ENCODE measurements at regions of chr20 and their contacts with region 1.

Region 1: DNA sequence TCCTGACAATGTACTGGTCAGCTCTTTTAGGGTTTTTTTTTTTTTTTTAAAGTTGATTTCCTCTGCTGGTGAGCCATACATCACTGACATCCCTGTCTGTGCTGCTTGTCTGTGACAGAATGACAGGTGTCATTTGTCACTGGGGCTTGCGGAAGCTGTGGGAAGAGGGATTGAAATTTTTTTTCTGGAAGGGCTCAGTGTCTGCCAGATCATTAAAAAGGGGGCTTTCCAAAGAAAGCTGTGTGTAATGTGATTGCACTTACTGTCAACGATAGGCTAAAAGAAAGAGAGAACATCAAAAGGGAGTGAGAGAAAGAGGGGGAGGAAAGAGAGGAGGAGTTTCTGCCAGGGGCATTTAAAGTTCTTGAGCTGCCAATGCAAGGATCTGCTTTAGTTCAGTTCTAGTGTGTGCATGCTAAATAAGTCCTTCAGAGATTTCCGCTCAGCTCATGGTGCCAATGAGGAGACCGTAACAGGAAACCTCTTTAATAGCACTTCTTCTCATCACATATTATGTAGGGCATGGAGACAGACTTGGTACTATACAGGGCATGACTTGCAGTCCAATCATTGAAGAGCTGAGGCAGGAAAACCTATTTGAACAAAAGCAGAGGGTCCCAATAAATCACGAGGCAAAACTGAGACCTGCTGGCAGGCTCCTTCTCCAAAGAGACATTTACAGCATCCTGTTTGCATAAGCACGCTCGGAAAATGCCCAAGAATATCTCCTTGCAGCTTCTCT is 177.2 kb downstream of the TSHZ2 start:
- DNase-seq: no peak
- H3K4me3 Mint-ChIP-seq: peak overlapping the region; percentile 49
- H3K27ac Mint-ChIP-seq: peak overlapping the region; percentile 43
- H3K4me1 Mint-ChIP-seq: peaks cover 44% of the 10 kb centered on the region
- H3K27me3 Mint-ChIP-seq: no peaks in the 10 kb centered on the region

Region 2: DNA sequence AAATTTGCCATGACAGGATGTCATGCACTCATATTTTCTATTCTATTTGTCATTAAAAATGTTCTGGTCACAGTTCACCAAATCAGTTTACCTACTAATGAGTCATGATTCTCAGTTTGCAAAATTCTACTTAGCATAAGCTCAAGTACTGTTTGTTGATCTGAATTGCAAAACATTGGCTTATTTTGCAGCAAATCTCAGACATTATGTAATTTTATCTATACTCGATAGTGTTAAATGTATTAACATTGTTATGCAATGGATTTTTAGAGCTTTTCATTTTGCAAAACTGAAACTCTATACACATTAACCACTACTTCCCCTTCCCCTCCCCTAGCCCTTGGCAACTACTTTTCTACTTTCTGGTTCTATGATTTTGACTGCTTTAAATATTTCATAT is 743.9 kb before region 1 on chr20:
- intact Hi-C with region 1: loop called (anchors 10 kb)
- DNase-seq: no peak
- H3K4me3 Mint-ChIP-seq: no peak overlapping the region
- H3K27ac Mint-ChIP-seq: peak overlapping the region; percentile 65
- H3K4me1 Mint-ChIP-seq: peaks cover 47% of the 10 kb centered on the region
- H3K27me3 Mint-ChIP-seq: no peaks in the 10 kb centered on the region

Region 3: DNA sequence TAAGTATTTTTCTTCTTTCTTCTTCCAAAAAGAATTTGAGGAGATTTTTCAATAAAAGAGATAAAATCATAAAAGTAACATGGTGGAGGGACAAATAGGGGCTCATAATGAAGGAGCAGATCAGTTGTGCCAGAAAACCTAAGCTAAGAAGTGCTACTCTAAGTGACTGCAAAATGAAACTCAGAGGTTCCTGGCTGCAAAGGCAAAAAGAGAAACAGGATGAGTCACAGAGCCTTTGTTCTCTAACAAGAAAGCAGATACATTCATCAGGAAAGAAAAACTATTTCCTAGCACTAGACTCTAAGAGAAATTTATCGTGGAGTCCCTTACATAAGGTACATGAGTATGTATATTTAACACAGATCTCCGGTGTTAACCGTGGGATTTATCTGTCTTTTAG is 127.4 kb before region 1 on chr20:
- intact Hi-C with region 1: loop called (anchors 2 kb)
- DNase-seq: peak; percentile 80
- H3K4me3 Mint-ChIP-seq: peak overlapping the region; percentile 65
- H3K27ac Mint-ChIP-seq: peak overlapping the region; percentile 85
- H3K4me1 Mint-ChIP-seq: peaks cover 71% of the 10 kb centered on the region
- H3K27me3 Mint-ChIP-seq: no peaks in the 10 kb centered on the region

Region 4: GRCh38 chr20:53077373-53078205 is 71.7 kb before region 1 on chr20:
- intact Hi-C with region 1: loop called (anchors 1 kb)
- DNase-seq: peak; percentile 68
- H3K4me3 Mint-ChIP-seq: no peak overlapping the region
- H3K27ac Mint-ChIP-seq: no peak overlapping the region
- H3K4me1 Mint-ChIP-seq: peaks cover 37% of the 10 kb centered on the region
- H3K27me3 Mint-ChIP-seq: no peaks in the 10 kb centered on the region

Region 5: DNA sequence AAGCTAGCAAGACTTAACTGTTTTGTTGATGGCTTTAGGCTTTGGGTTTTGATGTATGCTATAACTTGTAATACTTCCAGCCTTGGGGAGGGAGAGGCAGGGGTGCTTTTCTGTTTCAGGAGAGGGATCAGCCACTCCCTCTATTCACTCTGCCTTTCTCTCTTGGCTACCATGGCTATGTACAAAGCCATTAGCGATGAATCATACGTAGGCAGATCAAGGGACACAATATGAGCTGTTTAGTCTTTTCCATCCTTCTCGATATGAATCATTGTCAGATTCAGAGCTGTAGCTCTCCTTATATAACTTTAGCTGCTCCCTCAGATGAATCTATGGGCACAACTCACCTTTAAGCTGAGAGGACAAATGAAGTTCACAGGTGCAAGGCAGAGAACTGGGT is 53.5 kb after region 1 on chr20:
- intact Hi-C with region 1: loop called (anchors 5 kb)
- DNase-seq: no peak
- H3K4me3 Mint-ChIP-seq: no peak overlapping the region
- H3K27ac Mint-ChIP-seq: peak overlapping the region; percentile 62
- H3K4me1 Mint-ChIP-seq: peaks cover 15% of the 10 kb centered on the region
- H3K27me3 Mint-ChIP-seq: no peaks in the 10 kb centered on the region

Region 6: GRCh38 chr20:53322651-53323050 is 173.3 kb after region 1 on chr20:
- intact Hi-C with region 1: no loop called
- DNase-seq: peak; percentile 64
- H3K4me3 Mint-ChIP-seq: peak overlapping the region; percentile 57
- H3K27ac Mint-ChIP-seq: peak overlapping the region; percentile 86
- H3K4me1 Mint-ChIP-seq: peaks cover 18% of the 10 kb centered on the region
- H3K27me3 Mint-ChIP-seq: no peaks in the 10 kb centered on the region

Region 7: DNA sequence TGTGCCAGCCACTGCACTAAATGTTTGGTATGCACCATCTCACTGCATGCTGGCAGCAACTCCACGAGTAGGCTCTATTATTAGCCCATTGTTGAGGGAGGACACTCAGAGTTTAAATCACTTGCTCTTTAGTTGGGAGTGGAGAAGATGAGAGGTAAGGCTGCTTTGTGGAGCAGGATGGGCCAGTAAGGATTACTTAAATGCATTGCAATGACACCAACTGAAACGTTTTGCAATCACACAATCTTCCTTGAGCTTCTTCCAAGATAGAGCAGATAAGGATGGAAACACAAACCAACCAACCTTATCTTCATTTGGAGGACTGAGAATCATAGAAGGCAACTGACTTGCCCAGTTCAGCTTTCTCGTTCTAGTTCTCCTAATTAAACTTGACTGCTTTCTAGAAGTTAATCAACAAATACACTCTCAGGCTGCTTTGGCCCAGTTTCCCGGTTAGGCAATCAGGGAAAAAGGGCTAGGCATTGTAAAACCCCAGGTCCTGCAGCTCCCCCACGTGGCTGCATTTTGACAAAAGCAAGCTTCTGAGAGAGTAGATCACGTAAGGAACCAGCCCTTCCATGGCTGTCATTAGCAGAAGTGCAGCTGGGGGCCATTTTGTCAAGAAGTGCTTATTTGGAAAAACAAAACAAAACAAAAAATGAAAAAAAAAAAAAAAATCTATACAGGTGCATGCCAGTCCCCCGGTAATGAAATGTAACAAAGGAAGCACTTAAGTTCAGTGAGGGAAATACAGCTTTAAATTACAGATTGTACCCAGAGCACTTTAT is 790.4 kb after region 1 on chr20:
- intact Hi-C with region 1: loop called (anchors 10 kb)
- DNase-seq: peak; percentile 91
- H3K4me3 Mint-ChIP-seq: no peak overlapping the region
- H3K27ac Mint-ChIP-seq: peak overlapping the region; percentile 8
- H3K4me1 Mint-ChIP-seq: peaks cover 45% of the 10 kb centered on the region
- H3K27me3 Mint-ChIP-seq: no peaks in the 10 kb centered on the region

Measured in activated CD4-positive, alpha-beta T cell treated with anti-CD3 and anti-CD28 coated beads, Interleukin-2, amount 10 ng/mL, durations not matched to agents 24 days and 14 days (primary cell).